Posterior vena cava (tissue), 2 donors: ENCODE measurements at regions of chr6 and their contacts with region 1.

Region 1: GRCh38 chr6:16523606-16524379 is 237.5 kb downstream of the ATXN1 start:
- DNase-seq: no peak

Region 2: DNA sequence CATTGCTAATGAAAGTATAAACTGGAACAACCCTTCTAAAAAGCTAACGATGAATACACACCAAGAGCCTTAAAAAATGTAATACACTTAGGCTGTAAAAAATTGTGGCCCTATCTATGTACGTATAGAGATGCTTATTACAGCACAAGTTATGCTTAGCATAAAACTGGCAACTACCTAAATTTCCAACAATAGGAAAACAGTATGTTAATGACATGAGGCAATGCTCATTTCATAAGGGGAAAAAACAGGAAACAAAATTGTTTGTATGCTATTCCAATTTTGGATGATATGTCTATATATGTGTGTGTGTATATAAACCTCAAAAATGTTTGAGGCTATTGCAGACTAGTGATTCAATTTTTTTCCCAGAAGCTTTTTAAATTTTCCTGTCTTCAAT is 943.5 kb before region 1 on chr6:
- intact Hi-C with region 1: loop called in 1 of 2 experiments (anchors 5 kb)
- DNase-seq: no peak